HAP-1 (cell line): ENCODE measurements at regions of chr20 and their contacts with region 1.

Region 1: DNA sequence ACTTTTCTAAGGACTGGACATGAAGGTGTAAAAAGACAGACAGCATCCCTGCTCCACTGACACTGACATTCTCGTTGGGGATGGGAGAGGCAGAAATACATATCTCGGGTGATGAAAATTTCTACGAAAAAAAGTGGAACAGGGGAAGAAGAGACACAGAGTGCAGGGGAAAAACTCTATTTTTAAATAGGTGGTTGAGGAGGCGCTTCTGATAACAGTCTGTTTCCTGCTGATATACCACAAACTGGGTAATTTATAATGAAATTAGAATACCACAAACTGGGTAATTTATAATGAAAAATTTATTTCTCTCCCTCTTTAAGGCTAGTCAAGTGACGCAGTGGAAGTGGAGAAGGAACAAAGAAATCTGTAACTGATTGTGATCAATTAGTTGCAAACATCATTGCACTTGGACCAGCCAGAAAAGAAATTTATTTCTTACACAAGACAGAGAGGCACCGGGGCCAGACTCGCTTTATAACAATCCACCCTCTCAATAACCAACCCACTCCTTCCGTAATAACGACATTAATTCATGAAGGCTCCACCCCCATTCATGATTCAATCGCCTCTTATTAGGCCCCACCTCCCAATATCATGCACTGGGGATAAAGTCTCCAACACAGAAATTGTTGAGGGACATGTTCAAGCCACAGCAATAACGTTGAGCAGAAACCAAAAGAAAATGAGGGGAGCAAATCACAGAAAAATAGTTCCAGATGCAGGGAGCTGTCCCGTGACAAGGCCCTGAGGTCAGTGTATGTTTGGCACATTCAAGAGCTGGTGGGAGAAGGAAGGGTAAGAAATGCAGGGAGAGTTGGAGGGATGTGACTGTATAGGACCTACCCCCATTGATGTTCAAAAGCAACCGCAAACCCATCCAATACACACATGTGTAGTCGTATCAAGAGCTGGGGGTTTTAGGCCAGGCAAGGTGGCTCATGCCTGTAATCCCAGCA is 6.6 kb upstream of the SRSF6 start:
- DNase-seq: no peak
- H3K4me3 ChIP-seq: no peak overlapping the region
- H3K4me1 ChIP-seq: no peaks in the 10 kb centered on the region
- H3K27me3 ChIP-seq: no peaks in the 10 kb centered on the region

Region 2: GRCh38 chr20:44089987-44090674 is 639.0 kb after region 1 on chr20:
- in situ Hi-C with region 1: loop called (anchors 5 kb)
- DNase-seq: peak; percentile 18 to 55
- H3K4me3 ChIP-seq: no peak overlapping the region
- H3K4me1 ChIP-seq: no peaks in the 10 kb centered on the region
- H3K27me3 ChIP-seq: no peaks in the 10 kb centered on the region